ENCODE measurements at regions of chr19 and their contacts with region 1.

Region 1: DNA sequence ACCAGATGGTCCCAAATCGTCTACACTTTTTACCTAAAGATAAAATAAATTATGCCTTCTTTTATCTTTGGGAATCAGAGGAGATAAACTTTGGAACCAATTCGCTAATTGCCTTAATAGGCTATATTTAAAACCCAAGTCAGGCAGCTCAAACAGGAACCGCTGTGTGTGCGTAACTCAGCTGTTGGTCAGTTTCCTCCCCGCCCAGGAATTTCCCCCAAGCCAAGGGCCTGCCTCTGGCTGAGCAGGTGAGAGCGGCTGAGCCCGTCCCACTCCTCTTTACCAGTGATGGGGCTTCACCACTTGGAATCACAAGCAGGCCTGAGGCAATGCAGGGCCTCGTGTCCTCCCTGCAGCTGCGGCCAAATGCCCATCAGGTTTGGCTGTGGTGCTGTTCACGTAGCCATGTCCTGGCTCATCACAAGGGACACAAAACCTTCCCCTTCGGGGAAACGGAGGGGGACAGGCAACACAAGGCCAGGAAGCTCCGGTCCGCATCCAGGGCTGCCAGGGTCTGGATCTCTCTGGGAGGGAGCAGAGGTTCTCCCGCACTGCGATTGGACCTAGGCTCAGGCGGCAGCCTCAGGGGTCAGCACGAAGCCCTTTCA is 503 bp upstream of the SLC7A9 start:
- DNase-seq: no peak
- H3K4me3 ChIP-seq: no peak overlapping the region
- H3K27ac ChIP-seq: no peak overlapping the region
- H3K4me1 ChIP-seq: no peaks in the 10 kb centered on the region
- H3K27me3 ChIP-seq: no peaks in the 10 kb centered on the region
- CTCF ChIP-seq: no peak

Region 2: DNA sequence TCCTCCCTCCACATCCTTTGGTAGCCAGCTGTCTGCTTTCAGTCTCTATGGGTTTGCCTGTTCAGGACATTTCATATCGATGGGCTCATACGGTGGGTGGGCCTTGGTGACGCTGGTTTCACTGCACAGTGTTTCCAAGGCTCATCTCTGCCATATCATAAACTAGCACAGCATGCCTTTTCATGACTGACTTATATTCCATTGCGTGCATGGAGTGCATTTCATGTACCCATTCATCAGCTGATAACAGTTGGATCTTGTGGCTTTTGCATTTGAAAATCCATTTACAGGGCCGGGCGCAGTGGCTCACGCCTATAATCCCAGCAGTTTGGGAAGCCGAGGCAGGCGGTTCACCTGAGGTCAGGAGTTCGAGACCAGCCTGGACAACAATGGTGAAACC is 80.6 kb before region 1 on chr19:
- CTCF ChIA-PET with region 1: no interaction called
- dilution Hi-C with region 1: loop called (anchors 5 kb)
- in situ Hi-C with region 1: no loop called
- intact Hi-C with region 1: no loop called
- DNase-seq: no peak
- H3K4me3 ChIP-seq: no peak overlapping the region
- H3K27ac ChIP-seq: no peak overlapping the region
- H3K4me1 ChIP-seq: no peaks in the 10 kb centered on the region
- H3K27me3 ChIP-seq: no peaks in the 10 kb centered on the region
- CTCF ChIP-seq: no peak

Region 3: GRCh38 chr19:32924203-32924930 is 54.3 kb after region 1 on chr19:
- CTCF ChIA-PET with region 1: no interaction called
- dilution Hi-C with region 1: no loop called
- in situ Hi-C with region 1: no loop called
- intact Hi-C with region 1: no loop called
- DNase-seq: no peak
- H3K4me3 ChIP-seq: no peak overlapping the region
- H3K27ac ChIP-seq: no peak overlapping the region
- H3K4me1 ChIP-seq: no peaks in the 10 kb centered on the region
- H3K27me3 ChIP-seq: no peaks in the 10 kb centered on the region
- CTCF ChIP-seq: no peak

Region 4: GRCh38 chr19:32971715-32972540 is 101.9 kb after region 1 on chr19 and contains the starts of genes CEP89 and FAAP24:
- CTCF ChIA-PET with region 1: no interaction called
- dilution Hi-C with region 1: no loop called
- in situ Hi-C with region 1: no loop called
- intact Hi-C with region 1: no loop called
- DNase-seq: peak; percentile 99
- H3K4me3 ChIP-seq: peak within 1 kb of the TSS; percentile 60 to 92 (median 83)
- H3K27ac ChIP-seq: peak within 1 kb of the TSS; percentile 81
- H3K4me1 ChIP-seq: peaks cover 2% of the 10 kb centered on the region
- H3K27me3 ChIP-seq: no peaks in the 10 kb centered on the region
- CTCF ChIP-seq: no peak
- total RNA-seq, gene CEP89: 17.0 to 25.7 TPM
- total RNA-seq, gene FAAP24: 4.3 to 6.4 TPM